Transverse colon (tissue), 4 donors: ENCODE measurements at regions of chr1 and their contacts with region 1.

Region 1: GRCh38 chr1:199113265-199113869 is 474.5 kb downstream of the PTPRC start:
- DNase-seq: peak; percentile 54
- H3K4me3 ChIP-seq: no peak overlapping the region
- H3K27ac ChIP-seq: no peak overlapping the region
- H3K4me1 ChIP-seq: no peaks in the 10 kb centered on the region
- H3K27me3 ChIP-seq: no peaks in the 10 kb centered on the region
- CTCF ChIP-seq: peak; percentile 50 to 70 (median 66)
- EP300 ChIP-seq: no peak
- POLR2A ChIP-seq: no peak

Region 2: GRCh38 chr1:199054694-199055093 is 58.7 kb before region 1 on chr1:
- in situ Hi-C with region 1: no loop called
- intact Hi-C with region 1: no loop called
- DNase-seq: no peak
- H3K4me3 ChIP-seq: no peak overlapping the region
- H3K27ac ChIP-seq: no peak overlapping the region
- H3K4me1 ChIP-seq: no peaks in the 10 kb centered on the region
- H3K27me3 ChIP-seq: no peaks in the 10 kb centered on the region
- CTCF ChIP-seq: no peak
- EP300 ChIP-seq: no peak
- POLR2A ChIP-seq: no peak

Region 3: GRCh38 chr1:199067483-199067882 is 45.9 kb before region 1 on chr1:
- in situ Hi-C with region 1: no loop called
- intact Hi-C with region 1: no loop called
- DNase-seq: no peak
- H3K4me3 ChIP-seq: no peak overlapping the region
- H3K27ac ChIP-seq: no peak overlapping the region
- H3K4me1 ChIP-seq: no peaks in the 10 kb centered on the region
- H3K27me3 ChIP-seq: no peaks in the 10 kb centered on the region
- CTCF ChIP-seq: no peak
- EP300 ChIP-seq: no peak
- POLR2A ChIP-seq: no peak

Region 4: GRCh38 chr1:199184180-199184579 is 70.8 kb after region 1 on chr1:
- in situ Hi-C with region 1: no loop called
- intact Hi-C with region 1: loop called (anchors 2 kb)
- DNase-seq: no peak
- H3K4me3 ChIP-seq: no peak overlapping the region
- H3K27ac ChIP-seq: no peak overlapping the region
- H3K4me1 ChIP-seq: no peaks in the 10 kb centered on the region
- H3K27me3 ChIP-seq: no peaks in the 10 kb centered on the region
- CTCF ChIP-seq: no peak
- EP300 ChIP-seq: no peak
- POLR2A ChIP-seq: no peak